Left cardiac atrium (tissue), 4 donors: ENCODE measurements at regions of chr1 and their contacts with region 1.

Region 1: DNA sequence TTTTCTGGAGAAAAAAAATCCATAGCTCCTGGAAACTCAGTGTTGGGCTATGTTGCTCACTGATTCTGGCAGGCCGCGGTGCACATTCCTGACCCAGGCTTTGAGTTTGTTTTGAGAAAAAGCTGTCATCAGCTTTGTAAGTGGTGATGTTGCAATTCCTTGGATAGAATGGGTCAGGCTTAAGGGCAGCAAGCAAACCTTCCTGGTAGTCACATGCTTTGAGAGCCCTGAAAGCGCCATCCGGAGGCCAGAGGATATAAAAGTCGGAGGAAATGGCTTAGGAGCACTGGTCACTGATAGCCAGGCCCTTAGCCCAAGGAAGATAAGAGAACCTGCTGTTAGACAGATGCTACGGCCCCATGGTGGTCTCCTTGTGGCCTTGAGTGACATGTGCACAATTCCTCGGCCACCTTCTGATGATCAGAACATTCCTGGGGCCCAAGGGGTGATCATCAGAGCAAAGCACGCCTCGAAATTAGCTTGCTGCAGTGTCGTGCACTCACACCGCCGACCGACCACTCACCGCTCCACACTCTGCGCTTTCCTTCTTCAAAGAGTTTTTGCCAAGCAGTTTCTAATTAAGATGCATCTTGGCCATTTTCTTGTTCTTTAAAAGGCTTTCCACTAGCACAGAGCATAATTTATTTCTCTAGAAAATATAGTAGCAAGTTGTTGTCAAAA is 78.6 kb downstream of the MAN1C1 start:
- DNase-seq: peak; percentile 80
- ATAC-seq: peak; percentile 88 to 91

Region 2: GRCh38 chr1:25469177-25469576 is 226.1 kb before region 1 on chr1:
- intact Hi-C with region 1: no loop called
- DNase-seq: no peak
- ATAC-seq: no peak

Region 3: DNA sequence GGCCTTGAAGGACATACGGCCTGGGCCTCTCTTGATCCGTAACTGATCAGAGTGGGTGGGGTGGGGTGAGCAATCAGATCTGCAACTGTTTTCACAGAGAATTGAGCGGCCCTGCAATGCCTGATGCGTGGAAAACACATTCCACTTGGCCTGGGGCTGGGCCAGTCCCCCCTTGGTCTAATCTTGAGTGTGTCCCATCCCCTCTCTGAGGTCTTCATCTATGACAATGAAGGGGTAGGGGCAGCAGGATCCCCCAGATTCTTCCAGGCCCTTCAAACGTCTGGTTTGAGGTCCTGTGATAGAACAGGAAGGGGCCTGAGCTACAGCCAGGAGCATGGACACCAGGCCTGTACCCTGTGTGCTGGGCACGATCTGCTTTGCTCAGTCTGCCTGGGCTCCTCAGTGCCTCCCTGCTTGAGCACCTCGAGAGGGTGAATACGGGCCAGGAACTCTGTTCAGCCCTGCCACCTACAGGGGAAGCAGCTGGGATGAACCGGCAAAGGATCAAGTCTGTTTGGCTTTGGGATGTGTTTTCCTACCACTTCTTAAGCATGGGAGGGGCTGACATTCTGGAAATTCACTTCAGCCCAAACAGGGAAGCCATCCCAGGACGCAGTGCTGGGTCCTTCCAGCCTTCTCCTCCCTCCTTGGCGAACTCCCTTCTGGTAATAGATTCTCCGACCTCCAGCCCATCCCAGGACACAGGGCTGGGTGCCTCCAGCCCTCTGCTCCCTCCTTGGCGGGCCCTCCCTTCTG is 48.8 kb after region 1 on chr1:
- intact Hi-C with region 1: loop called in 1 of 2 experiments (anchors 5 kb)
- DNase-seq: peak; percentile 72
- ATAC-seq: peak; percentile 79 to 90